Esophagus muscularis mucosa (tissue), 4 donors: ENCODE measurements at regions of chr5 and their contacts with region 1.

Region 1: GRCh38 chr5:56802205-56802604 is 13.1 kb upstream of the MAP3K1 start:
- DNase-seq: no peak
- H3K4me3 ChIP-seq: no peak overlapping the region
- H3K27ac ChIP-seq: no peak overlapping the region
- H3K4me1 ChIP-seq: peaks cover 0 to 13% (median 5%) of the 10 kb centered on the region in 4 donors
- H3K27me3 ChIP-seq: no peaks in the 10 kb centered on the region
- CTCF ChIP-seq: no peak
- EP300 ChIP-seq: no peak
- POLR2A ChIP-seq: no peak

Region 2: GRCh38 chr5:56012281-56012963 is 789.8 kb before region 1 on chr5:
- intact Hi-C with region 1: loop called (anchors 10 kb)
- DNase-seq: no peak
- H3K4me3 ChIP-seq: no peak overlapping the region
- H3K27ac ChIP-seq: peak overlapping the region in 1 of 4 donors; percentile 19
- H3K4me1 ChIP-seq: peaks cover 0 to 8% (median 6%) of the 10 kb centered on the region in 4 donors
- H3K27me3 ChIP-seq: no peaks in the 10 kb centered on the region
- CTCF ChIP-seq: no peak
- EP300 ChIP-seq: no peak
- POLR2A ChIP-seq: no peak

Region 3: GRCh38 chr5:56457887-56458812 is 344.1 kb before region 1 on chr5:
- intact Hi-C with region 1: no loop called
- DNase-seq: no peak
- H3K4me3 ChIP-seq: no peak overlapping the region
- H3K27ac ChIP-seq: peak overlapping the region in 2 of 4 donors; percentile 2 to 35
- H3K4me1 ChIP-seq: peaks cover 12 to 20% (median 17%) of the 10 kb centered on the region in 4 donors
- H3K27me3 ChIP-seq: no peaks in the 10 kb centered on the region
- CTCF ChIP-seq: no peak
- EP300 ChIP-seq: no peak
- POLR2A ChIP-seq: no peak

Region 4: GRCh38 chr5:56763711-56764466 is 38.3 kb before region 1 on chr5:
- intact Hi-C with region 1: no loop called
- DNase-seq: no peak
- H3K4me3 ChIP-seq: no peak overlapping the region
- H3K27ac ChIP-seq: no peak overlapping the region
- H3K4me1 ChIP-seq: peaks cover 0 to 6% (median 2%) of the 10 kb centered on the region in 4 donors
- H3K27me3 ChIP-seq: no peaks in the 10 kb centered on the region
- CTCF ChIP-seq: no peak
- EP300 ChIP-seq: no peak
- POLR2A ChIP-seq: no peak

Region 5: GRCh38 chr5:57416249-57416994 is 614.2 kb after region 1 on chr5:
- intact Hi-C with region 1: no loop called
- DNase-seq: no peak
- H3K4me3 ChIP-seq: no peak overlapping the region
- H3K27ac ChIP-seq: no peak overlapping the region
- H3K4me1 ChIP-seq: peaks cover 0 to 10% (median under 1%) of the 10 kb centered on the region in 4 donors
- H3K27me3 ChIP-seq: no peaks in the 10 kb centered on the region
- CTCF ChIP-seq: no peak
- EP300 ChIP-seq: no peak
- POLR2A ChIP-seq: no peak